HEK293 (cell line): ENCODE measurements at regions of chr19 and their contacts with region 1.

Region 1: GRCh38 chr19:55216461-55217198 is 7.3 kb upstream of the PTPRH start:
- H3K4me3 ChIP-seq: peak overlapping the region; percentile 72
- H3K27ac ChIP-seq: peak overlapping the region; percentile 67
- H3K4me1 ChIP-seq: peaks cover 10% of the 10 kb centered on the region
- CTCF ChIP-seq: no peak

Region 2: GRCh38 chr19:55252760-55253663 is 36.4 kb after region 1 on chr19:
- CTCF ChIA-PET with region 1: interaction called, 3 read pairs
- POLR2A ChIA-PET with region 1: interaction called, 10 read pairs
- H3K4me3 ChIP-seq: no peak overlapping the region
- H3K27ac ChIP-seq: no peak overlapping the region
- H3K4me1 ChIP-seq: peaks cover 21% of the 10 kb centered on the region
- CTCF ChIP-seq: no peak

Region 3: DNA sequence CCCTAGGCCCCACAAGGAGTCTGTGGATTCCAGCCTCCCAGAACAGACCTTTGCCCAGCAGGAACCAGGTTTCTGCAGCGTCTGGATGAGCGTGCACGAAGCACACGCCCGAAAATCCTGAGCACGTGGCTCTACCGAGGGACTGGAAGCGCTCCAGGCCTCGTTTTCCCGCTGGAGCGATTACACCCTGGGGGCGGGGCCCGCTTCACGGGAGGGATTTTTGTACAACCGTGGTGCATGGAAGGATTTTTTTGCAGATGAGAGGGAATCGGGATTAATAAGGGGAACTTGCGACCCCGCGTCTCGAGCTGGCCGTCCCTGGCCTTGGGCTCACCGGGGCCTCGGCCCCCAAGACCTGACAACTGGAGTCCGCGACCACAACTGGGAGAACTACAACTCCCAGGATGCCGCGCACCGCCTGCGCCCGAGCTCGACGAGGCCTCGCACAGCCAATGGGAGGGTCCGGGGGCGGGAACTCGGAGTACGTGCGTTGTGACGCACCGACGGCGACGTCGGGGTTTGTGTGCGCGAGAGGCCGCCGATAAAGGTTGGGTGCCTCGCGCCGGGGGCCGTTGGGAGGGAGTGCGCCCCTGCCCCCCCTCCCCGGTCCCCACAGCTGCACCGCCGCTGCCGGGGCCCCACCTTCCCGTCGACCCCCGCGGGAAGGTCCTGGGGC is 259.6 kb after region 1 on chr19 and contains the start of gene ZNF628:
- CTCF ChIA-PET with region 1: no interaction called
- POLR2A ChIA-PET with region 1: no interaction called
- H3K4me3 ChIP-seq: peak within 1 kb of the TSS; percentile 68
- H3K27ac ChIP-seq: peak within 1 kb of the TSS; percentile 76
- H3K4me1 ChIP-seq: peaks cover 8% of the 10 kb centered on the region; the same call in 1 of the 2 replicates
- CTCF ChIP-seq: no peak